ENCODE measurements at regions of chr15 and their contacts with region 1.

Region 1: DNA sequence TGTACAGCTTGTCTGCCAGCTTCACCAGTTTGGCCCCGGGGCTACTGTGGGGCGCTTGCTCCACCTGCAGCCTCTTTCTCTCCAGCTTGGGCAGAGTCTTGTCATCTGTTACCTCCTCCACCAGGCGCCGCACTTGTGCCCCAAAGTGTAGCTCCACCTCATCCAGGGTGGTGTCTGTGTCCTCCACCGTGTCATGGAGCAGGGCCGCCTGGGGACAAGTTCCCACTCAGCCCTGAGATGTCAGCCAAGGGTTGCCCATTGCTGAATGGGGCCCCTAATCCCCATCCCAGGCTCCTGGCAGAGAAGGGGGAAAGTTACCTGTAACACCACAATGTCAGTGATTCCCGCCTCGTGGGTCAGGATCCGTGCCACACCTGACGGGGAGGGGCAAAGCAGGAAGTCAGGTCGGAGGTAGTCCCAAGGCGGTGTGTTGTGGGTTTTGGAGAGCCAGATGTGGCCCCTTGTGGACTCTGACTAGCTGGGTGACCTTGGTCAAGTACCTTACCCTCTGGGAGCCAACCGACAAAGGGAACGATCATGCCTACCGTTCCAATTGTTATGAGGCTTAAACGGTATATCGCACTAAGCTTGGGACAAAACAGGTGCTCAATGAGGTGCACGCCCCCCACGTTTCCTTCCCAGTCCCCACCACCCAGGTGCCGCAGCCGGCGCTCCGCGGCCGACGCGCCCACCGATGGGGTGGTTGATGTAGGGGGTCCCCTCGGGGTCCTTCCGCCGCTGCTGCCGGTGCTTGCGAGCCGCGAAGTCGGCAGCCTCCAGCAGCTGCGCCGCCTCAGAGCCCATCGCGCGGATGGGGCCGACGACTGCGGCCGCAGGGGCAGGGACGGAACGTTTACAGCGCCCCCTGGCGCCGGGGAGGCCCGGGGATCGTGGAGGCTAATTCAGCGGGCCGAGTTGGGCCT is at the start of gene HDDC3:
- DNase-seq: peak; percentile 92
- ATAC-seq: peak; percentile 52
- H3K4me3 ChIP-seq: peak within 1 kb of the TSS; percentile 72 to 97 (median 86)
- H3K4me3 Mint-ChIP-seq: peak within 1 kb of the TSS; percentile 98
- H3K27ac ChIP-seq: peak within 1 kb of the TSS; percentile 93 to 94
- H3K27ac Mint-ChIP-seq: peak within 1 kb of the TSS; percentile 99
- H3K4me1 ChIP-seq: peaks cover 42 to 64% of the 10 kb centered on the region in 2 donors
- H3K4me1 Mint-ChIP-seq: peaks cover 52% of the 10 kb centered on the region
- H3K27me3 ChIP-seq: no peaks in the 10 kb centered on the region
- H3K27me3 Mint-ChIP-seq: no peaks in the 10 kb centered on the region
- CTCF ChIP-seq: peak; percentile 91
- total RNA-seq, gene HDDC3: 23.4 and 23.9 TPM in 2 replicates

Region 2: GRCh38 chr15:90101969-90102890 is 829.8 kb before region 1 on chr15 and contains the start of gene IDH2:
- CTCF ChIA-PET with region 1: no interaction called
- POLR2A ChIA-PET with region 1: interaction called, 5 read pairs
- intact Hi-C with region 1: loop called (anchors 1 kb)
- DNase-seq: peak; percentile 84
- ATAC-seq: peak; percentile 88
- H3K4me3 ChIP-seq: peak within 1 kb of the TSS; percentile 39 to 76 (median 73)
- H3K4me3 Mint-ChIP-seq: peak within 1 kb of the TSS; percentile 90
- H3K27ac ChIP-seq: peak within 1 kb of the TSS; percentile 53 to 81
- H3K27ac Mint-ChIP-seq: peak within 1 kb of the TSS; percentile 97
- H3K4me1 ChIP-seq: peaks cover 43 to 47% of the 10 kb centered on the region in 2 donors
- H3K4me1 Mint-ChIP-seq: peaks cover 45% of the 10 kb centered on the region
- H3K27me3 ChIP-seq: peaks cover 0 to 5% (median 1%) of the 10 kb centered on the region in 4 experiments
- H3K27me3 Mint-ChIP-seq: peaks cover 6% of the 10 kb centered on the region
- CTCF ChIP-seq: no peak
- total RNA-seq, gene IDH2: 30.7 and 33.3 TPM in 2 replicates

Region 3: DNA sequence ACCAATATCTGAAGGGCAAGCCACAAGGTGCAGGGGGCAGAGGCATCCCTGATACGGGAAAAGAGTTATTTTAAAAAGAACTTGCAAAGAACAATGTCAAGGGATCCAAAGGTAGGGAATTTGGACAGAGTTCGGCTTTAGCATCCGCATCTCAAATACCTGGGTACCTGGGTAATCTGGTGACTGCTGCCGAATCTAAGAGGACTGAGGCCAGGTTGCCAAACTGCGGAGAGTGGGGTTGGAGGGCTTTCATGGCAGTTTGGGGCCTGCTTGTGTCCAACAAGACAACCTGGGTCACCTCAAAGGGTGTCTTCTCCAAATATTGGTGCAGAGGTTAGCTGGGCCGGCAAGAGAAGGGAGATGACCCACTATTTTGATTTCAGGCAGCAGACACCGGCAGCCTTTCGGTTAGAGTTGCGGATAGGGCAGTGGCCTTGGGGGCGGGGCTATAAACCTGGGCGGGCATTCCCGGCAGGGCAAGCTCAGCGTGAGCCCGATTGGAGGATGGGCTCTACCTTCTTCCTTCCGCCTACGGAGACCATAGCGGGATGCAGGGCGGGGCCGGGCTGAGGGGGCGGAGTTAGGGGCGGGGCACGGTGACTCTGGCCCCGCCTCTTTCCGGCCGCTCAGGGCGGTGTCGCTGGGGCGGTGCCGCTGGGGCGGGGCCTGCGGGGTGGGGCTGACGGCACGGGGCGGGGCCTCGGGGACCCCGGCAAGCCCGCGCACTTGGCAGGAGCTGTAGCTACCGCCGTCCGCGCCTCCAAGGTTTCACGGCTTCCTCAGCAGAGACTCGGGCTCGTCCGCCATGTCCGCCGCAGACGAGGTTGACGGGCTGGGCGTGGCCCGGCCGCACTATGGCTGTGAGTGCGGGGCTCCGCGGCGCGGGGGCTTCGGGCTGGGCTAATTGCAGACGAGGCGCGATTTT is 544.2 kb before region 1 on chr15 and contains the start of gene IQGAP1:
- CTCF ChIA-PET with region 1: interaction called, 4 read pairs
- POLR2A ChIA-PET with region 1: interaction called, 9 read pairs
- intact Hi-C with region 1: loop called (anchors 1 kb)
- DNase-seq: peak; percentile 97
- ATAC-seq: peak; percentile 86
- H3K4me3 ChIP-seq: peak within 1 kb of the TSS; percentile 72 to 93 (median 87)
- H3K4me3 Mint-ChIP-seq: peak within 1 kb of the TSS; percentile 92
- H3K27ac ChIP-seq: peak within 1 kb of the TSS; percentile 91 to 95
- H3K27ac Mint-ChIP-seq: peak within 1 kb of the TSS; percentile 99
- H3K4me1 ChIP-seq: peaks cover 22 to 26% of the 10 kb centered on the region in 2 donors
- H3K4me1 Mint-ChIP-seq: peaks cover 36% of the 10 kb centered on the region
- H3K27me3 ChIP-seq: no peaks in the 10 kb centered on the region
- H3K27me3 Mint-ChIP-seq: no peaks in the 10 kb centered on the region
- CTCF ChIP-seq: no peak
- total RNA-seq, gene IQGAP1: 216 and 233 TPM in 2 replicates

Region 4: DNA sequence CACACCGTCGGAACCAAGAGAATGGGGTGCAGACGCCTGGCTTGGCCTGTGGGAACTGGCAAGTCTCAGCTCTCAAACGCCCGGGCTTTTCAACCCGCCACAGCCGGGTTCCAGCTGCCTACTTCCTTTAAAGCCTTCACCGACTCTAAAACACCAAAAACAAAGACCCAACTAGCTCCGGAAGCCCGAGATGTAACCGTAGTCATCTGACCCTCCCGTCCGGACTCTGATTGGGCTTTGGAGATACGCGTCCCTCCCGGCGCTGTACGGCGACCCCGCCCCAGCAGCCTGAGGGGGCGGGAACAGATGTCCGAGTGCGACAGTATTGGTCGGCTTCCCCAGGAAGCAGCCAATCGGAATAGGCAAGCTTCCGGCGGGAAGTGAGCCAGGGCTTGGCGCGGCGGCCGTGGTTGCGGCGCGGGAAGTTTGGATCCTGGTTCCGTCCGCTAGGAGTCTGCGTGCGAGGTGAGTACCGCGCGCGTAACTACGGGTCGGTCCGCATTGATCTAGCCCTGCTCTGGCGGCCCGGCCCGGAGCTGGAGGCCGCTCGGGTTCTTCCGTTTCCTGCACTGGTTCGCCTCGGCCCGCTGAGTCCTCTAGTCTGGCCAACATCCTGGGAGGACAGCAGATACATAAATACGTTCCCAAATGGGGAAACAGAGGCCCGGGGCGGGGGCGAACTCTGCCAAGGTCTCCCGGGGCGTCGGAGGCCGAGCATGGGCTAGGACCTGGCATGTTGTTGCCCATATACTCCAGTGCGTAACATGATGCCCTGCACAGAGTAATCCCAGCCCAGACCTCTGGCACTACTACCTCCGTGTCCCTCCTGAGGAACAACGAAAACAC is 214.8 kb before region 1 on chr15 and contains the start of gene BLM:
- CTCF ChIA-PET with region 1: interaction called, 5 read pairs
- POLR2A ChIA-PET with region 1: interaction called, 5 read pairs
- intact Hi-C with region 1: loop called (anchors 2 kb)
- DNase-seq: peak; percentile 98
- ATAC-seq: peak; percentile 100
- H3K4me3 ChIP-seq: peak within 1 kb of the TSS; percentile 86 to 98 (median 97)
- H3K4me3 Mint-ChIP-seq: peak within 1 kb of the TSS; percentile 94
- H3K27ac ChIP-seq: peak within 1 kb of the TSS; percentile 81 to 89
- H3K27ac Mint-ChIP-seq: peak within 1 kb of the TSS; percentile 94
- H3K4me1 ChIP-seq: peaks cover 15 to 16% of the 10 kb centered on the region in 2 donors
- H3K4me1 Mint-ChIP-seq: peaks cover 28% of the 10 kb centered on the region
- H3K27me3 ChIP-seq: no peaks in the 10 kb centered on the region
- H3K27me3 Mint-ChIP-seq: no peaks in the 10 kb centered on the region
- CTCF ChIP-seq: peak; percentile 30
- total RNA-seq, gene BLM: 17.4 and 17.8 TPM in 2 replicates

Region 5: DNA sequence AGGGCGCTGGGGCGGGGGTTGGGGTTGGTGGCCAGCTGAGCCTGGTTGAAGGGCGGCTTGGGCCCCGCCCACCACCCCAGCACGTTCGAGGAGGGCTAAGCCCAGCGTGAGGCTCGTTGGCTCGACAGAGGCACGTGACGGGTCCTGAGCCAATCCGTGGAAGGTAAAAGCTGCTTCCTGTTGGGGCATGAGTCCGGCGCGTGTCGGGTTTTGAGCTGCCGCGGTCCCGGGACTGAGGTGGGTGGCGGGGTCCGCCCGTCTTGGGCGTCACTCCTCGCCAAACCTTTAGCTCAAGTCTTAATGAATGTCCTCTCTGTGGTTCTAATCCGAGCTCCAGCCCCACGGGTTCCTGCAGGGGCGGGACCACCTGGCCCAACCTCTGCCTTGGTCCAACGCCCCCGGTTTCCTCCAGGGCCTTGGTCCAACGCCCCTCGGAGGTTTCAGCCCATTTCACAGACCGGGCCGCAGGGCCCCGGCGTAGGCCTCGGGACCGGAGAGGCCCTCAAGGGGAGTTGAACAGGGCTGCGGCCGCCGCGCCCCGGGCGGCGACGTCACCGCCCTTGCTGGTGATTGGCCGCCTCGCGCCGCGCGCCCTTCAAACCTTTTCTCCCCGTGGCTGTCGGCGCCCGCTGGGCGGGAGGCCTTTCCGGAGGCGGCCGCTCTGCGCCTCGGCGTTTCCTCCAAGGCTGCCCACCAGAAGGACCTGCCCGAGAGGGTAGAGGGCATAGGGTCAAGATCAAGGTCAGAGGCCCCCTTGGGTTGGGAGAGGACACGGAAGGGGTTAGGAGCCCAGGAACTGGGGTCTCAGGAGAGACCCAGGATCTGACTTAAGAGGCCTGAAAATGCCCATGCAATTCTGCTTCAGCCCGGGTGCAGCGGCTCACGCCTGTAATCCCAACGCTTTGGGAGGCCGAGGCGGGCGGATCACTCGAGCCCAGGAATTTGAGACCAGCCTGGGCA is 23.0 kb after region 1 on chr15 and contains the start of gene RCCD1:
- CTCF ChIA-PET with region 1: interaction called, 118 read pairs
- POLR2A ChIA-PET with region 1: interaction called, 12 read pairs
- intact Hi-C with region 1: loop called (anchors 1 kb)
- DNase-seq: peak; percentile 92
- ATAC-seq: peak; percentile 95
- H3K4me3 ChIP-seq: peak within 1 kb of the TSS; percentile 69 to 93 (median 89)
- H3K4me3 Mint-ChIP-seq: peak within 1 kb of the TSS; percentile 90
- H3K27ac ChIP-seq: peak within 1 kb of the TSS; percentile 97
- H3K27ac Mint-ChIP-seq: peak within 1 kb of the TSS; percentile 92
- H3K4me1 ChIP-seq: peaks cover 16 to 24% of the 10 kb centered on the region in 2 donors
- H3K4me1 Mint-ChIP-seq: peaks cover 21% of the 10 kb centered on the region
- H3K27me3 ChIP-seq: no peaks in the 10 kb centered on the region
- H3K27me3 Mint-ChIP-seq: no peaks in the 10 kb centered on the region
- CTCF ChIP-seq: no peak
- total RNA-seq, gene RCCD1: 18.9 and 20.5 TPM in 2 replicates